ENCODE measurements at regions of chr22 and their contacts with region 1.

Region 1: DNA sequence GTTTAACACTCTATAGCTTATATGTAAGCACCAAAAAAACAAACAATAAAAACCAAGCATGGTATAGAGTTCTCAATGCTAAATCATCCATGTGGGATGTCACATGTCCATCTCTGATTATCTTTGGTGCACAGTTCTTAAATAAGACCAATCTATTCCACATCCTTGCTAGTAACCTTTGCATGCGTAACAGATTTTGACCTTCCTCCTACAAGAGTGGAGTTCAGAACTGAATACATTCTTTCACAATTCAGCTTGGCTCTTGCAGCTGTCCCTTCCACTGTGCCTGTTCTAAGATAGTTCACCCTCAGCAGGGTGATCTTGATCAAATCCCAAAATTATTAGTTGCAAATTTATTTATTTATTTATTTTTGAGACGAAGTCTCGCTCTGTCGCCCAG is 21.1 kb downstream of the PRR14L start:
- DNase-seq: no peak
- ATAC-seq: no peak
- H3K4me3 ChIP-seq: no peak overlapping the region
- H3K27ac ChIP-seq: no peak overlapping the region
- H3K4me1 ChIP-seq: peaks cover 6 to 12% (median 9%) of the 10 kb centered on the region in 3 donors
- H3K27me3 ChIP-seq: no peaks in the 10 kb centered on the region
- CTCF ChIP-seq: no peak

Region 2: GRCh38 chr22:31574055-31574670 is 154.7 kb before region 1 on chr22:
- intact Hi-C with region 1: no loop called
- DNase-seq: no peak
- ATAC-seq: no peak
- H3K4me3 ChIP-seq: no peak overlapping the region
- H3K27ac ChIP-seq: no peak overlapping the region
- H3K4me1 ChIP-seq: no peaks in the 10 kb centered on the region
- H3K27me3 ChIP-seq: no peaks in the 10 kb centered on the region
- CTCF ChIP-seq: no peak

Region 3: DNA sequence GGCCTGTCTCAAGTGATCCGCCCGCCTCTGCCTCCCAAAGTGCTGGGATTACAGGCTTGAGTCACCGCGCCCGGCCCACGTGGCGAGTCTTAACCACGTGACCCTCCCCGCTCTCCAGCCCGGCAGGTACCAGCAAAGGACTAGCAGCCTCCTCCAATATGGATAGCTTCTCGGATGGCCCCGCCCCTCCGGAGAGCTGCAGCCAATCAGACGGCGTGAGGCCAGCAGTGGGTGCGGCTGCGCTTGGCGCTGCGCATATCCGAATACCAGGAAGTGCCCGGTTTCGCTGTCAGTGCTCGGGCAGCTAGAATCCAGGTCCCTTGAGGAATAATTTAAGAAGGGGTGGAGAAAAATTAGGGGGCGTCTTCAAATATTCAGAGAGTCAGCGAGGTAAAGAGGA is 52.2 kb before region 1 on chr22:
- intact Hi-C with region 1: loop called in 1 of 3 experiments (anchors 10 kb)
- DNase-seq: peak; percentile 93 to 98 (median 97)
- ATAC-seq: peak; percentile 100
- H3K4me3 ChIP-seq: peak overlapping the region in 3 of 4 donors; percentile 19 to 38 (median 32)
- H3K27ac ChIP-seq: peak overlapping the region in 3 of 4 donors; percentile 28 to 39 (median 33)
- H3K4me1 ChIP-seq: peaks cover 0 to 3% (median 2%) of the 10 kb centered on the region in 3 donors
- H3K27me3 ChIP-seq: no peaks in the 10 kb centered on the region
- CTCF ChIP-seq: no peak